A549 (cell line): ENCODE measurements at regions of chr16 and their contacts with region 1.

Region 1: GRCh38 chr16:24504472-24505345 is 34.7 kb upstream of the RBBP6 start:
- DNase-seq: peak; percentile 65 to 74
- ATAC-seq: peak; percentile 92 to 98
- H3K4me3 ChIP-seq: no peak overlapping the region
- H3K27ac ChIP-seq: no peak overlapping the region
- H3K4me1 ChIP-seq: no peaks in the 10 kb centered on the region
- CTCF ChIP-seq: peak; percentile 82
- EP300 ChIP-seq: no peak
- POLR2A ChIP-seq: no peak
- RAD21 ChIP-seq: peak; percentile 91 to 94

Region 2: DNA sequence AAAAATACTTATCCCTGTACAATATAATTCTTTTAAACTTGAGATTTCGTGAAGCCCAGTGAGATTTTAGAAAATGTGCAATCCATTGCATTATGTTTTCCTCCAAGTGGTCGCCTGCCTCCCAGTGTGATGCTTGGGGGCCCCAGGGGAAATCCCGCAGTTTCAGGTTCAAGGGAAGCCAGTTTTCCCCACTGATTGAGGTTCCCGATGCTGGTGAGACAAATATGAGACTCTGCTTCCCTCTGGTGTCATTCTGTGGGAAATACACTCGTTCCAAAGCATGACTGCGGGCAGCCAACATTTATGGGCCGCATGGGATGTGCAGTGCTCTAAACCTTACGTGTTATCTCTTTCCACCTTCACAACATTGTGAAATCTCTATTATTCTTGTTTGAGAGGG is 468.1 kb before region 1 on chr16:
- CTCF ChIA-PET with region 1: interaction called, 279 read pairs
- POLR2A ChIA-PET with region 1: no interaction called
- DNase-seq: peak; percentile 48 to 84
- ATAC-seq: peak; percentile 78 to 91
- H3K4me3 ChIP-seq: no peak overlapping the region
- H3K27ac ChIP-seq: no peak overlapping the region
- H3K4me1 ChIP-seq: no peaks in the 10 kb centered on the region
- CTCF ChIP-seq: peak; percentile 80
- EP300 ChIP-seq: no peak
- POLR2A ChIP-seq: no peak
- RAD21 ChIP-seq: peak; percentile 89 to 93

Region 3: DNA sequence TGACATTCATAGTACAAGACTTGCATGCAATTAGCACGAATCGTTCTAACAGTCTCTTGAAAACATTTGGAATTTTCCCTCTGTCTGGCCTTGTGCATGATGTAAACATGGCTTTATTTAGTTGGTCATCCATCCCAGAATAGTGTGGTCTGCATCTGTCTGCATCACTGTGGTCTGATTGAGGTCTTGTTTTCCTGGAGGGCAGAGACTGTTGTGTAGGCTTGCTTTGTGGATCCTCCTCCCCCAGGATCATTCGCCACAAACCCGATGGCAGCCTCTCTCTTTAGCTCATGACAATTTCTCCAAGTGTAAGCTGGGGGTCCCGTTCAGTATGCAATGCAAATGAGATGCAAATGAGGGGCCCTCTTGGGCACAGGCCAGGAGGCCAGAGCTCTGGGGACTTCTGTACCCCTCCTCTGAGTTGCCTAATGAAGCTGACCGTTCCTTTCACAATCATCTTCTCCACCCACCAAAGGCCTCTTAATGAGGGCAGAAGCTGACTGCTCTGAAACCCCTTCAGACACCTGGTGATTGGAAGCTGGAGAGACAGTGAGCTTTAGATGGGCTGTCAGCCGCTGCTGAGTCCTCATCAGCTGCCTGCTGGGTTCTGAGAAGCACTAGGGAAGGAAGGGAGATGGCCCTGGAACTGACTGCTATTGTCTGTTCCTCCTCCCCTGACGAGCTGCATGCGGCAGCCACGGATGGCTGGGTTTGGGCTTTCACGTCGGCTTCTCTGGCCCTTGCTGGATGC is 449.8 kb before region 1 on chr16:
- CTCF ChIA-PET with region 1: interaction called, 10 read pairs
- POLR2A ChIA-PET with region 1: no interaction called
- DNase-seq: no peak
- ATAC-seq: no peak
- H3K4me3 ChIP-seq: no peak overlapping the region
- H3K27ac ChIP-seq: no peak overlapping the region
- H3K4me1 ChIP-seq: no peaks in the 10 kb centered on the region
- CTCF ChIP-seq: no peak
- EP300 ChIP-seq: no peak
- POLR2A ChIP-seq: no peak
- RAD21 ChIP-seq: no peak

Region 4: DNA sequence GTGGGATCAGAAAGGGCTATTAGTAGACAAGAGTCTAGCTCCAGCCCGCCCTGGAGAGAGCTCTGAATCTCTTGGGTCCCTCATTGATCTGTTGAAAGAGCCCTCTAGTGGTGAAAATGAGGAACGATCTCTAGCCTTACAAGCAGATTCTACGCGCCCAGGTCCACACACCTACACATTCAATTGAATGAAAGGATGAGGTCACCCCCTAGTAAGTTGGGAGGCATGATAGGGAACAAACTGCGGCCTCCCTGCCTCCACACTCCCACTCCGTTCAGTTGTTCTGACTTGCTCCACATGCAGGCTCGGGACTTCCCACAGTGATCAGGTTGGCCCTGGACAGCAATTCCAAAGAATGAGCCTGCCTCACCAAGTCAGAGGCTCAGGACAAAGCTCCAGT is 251.5 kb before region 1 on chr16:
- CTCF ChIA-PET with region 1: interaction called, 17 read pairs
- POLR2A ChIA-PET with region 1: no interaction called
- DNase-seq: peak; percentile 45 to 65
- ATAC-seq: peak; percentile 80 to 92; a peak in 5 of 6 replicates
- H3K4me3 ChIP-seq: no peak overlapping the region
- H3K27ac ChIP-seq: no peak overlapping the region
- H3K4me1 ChIP-seq: no peaks in the 10 kb centered on the region
- CTCF ChIP-seq: peak; percentile 61
- EP300 ChIP-seq: no peak
- POLR2A ChIP-seq: no peak
- RAD21 ChIP-seq: peak; percentile 24 to 43; a peak in 2 of 5 replicates

Region 5: GRCh38 chr16:24493859-24494258 is 10.8 kb before region 1 on chr16:
- CTCF ChIA-PET with region 1: interaction called, 16 read pairs
- POLR2A ChIA-PET with region 1: no interaction called
- DNase-seq: peak in 1 of 2 experiments; percentile 18
- ATAC-seq: 0 out of 6 replicates have a peak, but pooled peaks of 1 of the 2 experiments have one; percentile 48
- H3K4me3 ChIP-seq: no peak overlapping the region
- H3K27ac ChIP-seq: no peak overlapping the region
- H3K4me1 ChIP-seq: no peaks in the 10 kb centered on the region
- CTCF ChIP-seq: no peak
- EP300 ChIP-seq: no peak
- POLR2A ChIP-seq: no peak
- RAD21 ChIP-seq: no peak

Region 6: GRCh38 chr16:24670623-24671454 is 166.1 kb after region 1 on chr16:
- CTCF ChIA-PET with region 1: no interaction called
- POLR2A ChIA-PET with region 1: no interaction called
- DNase-seq: peak; percentile 68 to 82
- ATAC-seq: peak; percentile 76 to 81
- H3K4me3 ChIP-seq: no peak overlapping the region
- H3K27ac ChIP-seq: peak overlapping the region; percentile 29 to 88
- H3K4me1 ChIP-seq: peaks cover 35% of the 10 kb centered on the region
- CTCF ChIP-seq: no peak
- EP300 ChIP-seq: no peak
- POLR2A ChIP-seq: no peak
- RAD21 ChIP-seq: no peak